Heart right ventricle (tissue), 16 donors: ENCODE measurements at regions of chr1 and their contacts with region 1.

Region 1: GRCh38 chr1:67832737-67833601 is at the start of gene GNG12:
- DNase-seq: peak; percentile 68 to 75
- ATAC-seq: peak; percentile 69 to 93 (median 86)
- H3K4me3 ChIP-seq: peak within 1 kb of the TSS; percentile 60 to 94 (median 80)
- H3K27ac ChIP-seq: peak within 1 kb of the TSS; percentile 53 to 89 (median 84)
- H3K4me1 ChIP-seq: peaks cover 0 to 33% (median 18%) of the 10 kb centered on the region in 9 donors
- H3K27me3 ChIP-seq: peaks cover 0 to 61% (median 0%) of the 10 kb centered on the region in 7 donors
- CTCF ChIP-seq: no peak
- total RNA-seq, gene GNG12: 32.0 to 49.4 (median 35.8) TPM

Region 2: GRCh38 chr1:67535474-67535873 is 297.5 kb before region 1 on chr1:
- intact Hi-C with region 1: loop called in 5 of 10 experiments (anchors 5 to 10 kb)
- DNase-seq: peak; percentile 72 to 73
- ATAC-seq: peak in 7 of 8 donors; percentile 72 to 88 (median 79)
- H3K4me3 ChIP-seq: no peak overlapping the region
- H3K27ac ChIP-seq: no peak overlapping the region
- H3K4me1 ChIP-seq: peaks cover 0 to 14% (median 9%) of the 10 kb centered on the region in 9 donors
- H3K27me3 ChIP-seq: no peaks in the 10 kb centered on the region
- CTCF ChIP-seq: peak; percentile 63 to 93 (median 89)

Region 3: DNA sequence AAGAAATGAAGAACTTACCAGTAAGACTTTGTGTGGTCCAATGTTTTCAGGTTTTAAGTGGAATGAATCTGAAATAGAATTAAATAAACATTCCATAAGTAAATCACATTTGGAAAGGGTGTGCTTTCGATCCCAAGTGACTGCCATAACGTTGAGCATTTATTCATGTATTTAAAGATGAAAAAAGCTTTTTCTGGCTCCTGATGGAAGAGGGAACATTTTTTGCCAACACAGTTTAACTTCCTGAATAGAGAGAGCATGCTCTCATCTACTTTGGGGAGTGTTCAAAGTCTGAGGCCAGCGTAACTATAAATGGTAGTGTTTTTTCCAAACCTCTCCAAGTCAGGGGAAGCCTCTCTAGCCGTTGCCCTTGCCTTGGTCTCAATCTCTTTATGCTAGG is 55.5 kb before region 1 on chr1:
- intact Hi-C with region 1: loop called in 3 of 10 experiments (anchors 5 to 10 kb)
- DNase-seq: no peak
- ATAC-seq: peak in 1 of 8 donors; percentile 19
- H3K4me3 ChIP-seq: no peak overlapping the region
- H3K27ac ChIP-seq: peak overlapping the region in 3 of 10 donors; percentile 0 to 60 (median 11)
- H3K4me1 ChIP-seq: peaks cover 0 to 29% (median 7%) of the 10 kb centered on the region in 9 donors
- H3K27me3 ChIP-seq: no peaks in the 10 kb centered on the region
- CTCF ChIP-seq: no peak